Psoas muscle (tissue), 8 donors: ENCODE measurements at regions of chr6 and their contacts with region 1.

Region 1: DNA sequence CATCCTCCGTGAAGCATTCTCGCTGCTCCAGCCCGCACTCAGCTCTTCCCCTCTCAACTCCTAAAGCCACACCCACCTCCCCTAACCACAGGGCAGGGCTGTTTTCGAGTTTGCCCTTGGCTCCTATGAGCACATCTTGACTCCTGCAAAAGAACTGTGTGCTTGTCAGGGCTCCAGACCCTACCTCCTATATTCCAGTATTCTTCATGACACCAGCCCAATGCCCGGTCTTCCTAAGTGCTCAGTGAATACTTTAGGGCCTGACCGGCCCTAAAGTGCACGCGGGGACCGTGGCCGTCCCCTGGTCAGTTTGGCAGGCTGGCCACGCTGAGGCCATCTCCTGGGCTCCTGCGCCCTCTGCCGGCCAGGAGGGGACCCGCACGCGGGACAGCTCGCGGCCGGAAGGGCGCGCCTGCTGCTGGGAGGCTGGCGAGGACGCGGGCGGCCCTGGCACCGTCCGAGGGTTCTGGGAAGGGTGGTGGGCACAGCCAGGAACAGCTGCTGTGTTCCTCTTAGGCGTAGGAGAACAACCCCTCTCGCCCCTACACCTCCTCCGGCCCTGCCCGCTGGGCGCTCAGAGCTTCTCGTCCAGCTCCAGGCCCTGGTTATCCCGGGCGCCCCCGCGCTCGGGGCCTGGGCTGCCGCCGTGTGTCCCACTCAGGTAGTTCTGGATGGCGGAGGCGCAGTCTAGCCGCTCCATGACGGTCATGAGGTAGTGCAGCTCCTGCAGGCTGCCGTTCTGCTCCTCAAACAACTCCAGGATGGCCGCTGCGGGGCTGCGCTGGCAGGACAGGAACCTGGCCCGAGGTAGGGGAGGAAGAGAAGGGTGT is 11.0 kb downstream of the UNC5CL start:
- DNase-seq: peak; percentile 89 to 94
- ATAC-seq: peak; percentile 96 to 98 (median 96)
- H3K4me3 ChIP-seq: peak overlapping the region; percentile 68
- H3K27ac ChIP-seq: peak overlapping the region; percentile 85
- H3K4me1 ChIP-seq: peaks cover 4% of the 10 kb centered on the region
- H3K27me3 ChIP-seq: no peaks in the 10 kb centered on the region
- CTCF ChIP-seq: peak; percentile 100

Region 2: GRCh38 chr6:39980839-39981580 is 1047.0 kb before region 1 on chr6:
- intact Hi-C with region 1: loop called in 1 of 2 experiments (anchors 5 kb)
- DNase-seq: no peak
- ATAC-seq: peak; percentile 77 to 96 (median 85)
- H3K4me3 ChIP-seq: no peak overlapping the region
- H3K27ac ChIP-seq: no peak overlapping the region
- H3K4me1 ChIP-seq: peaks cover 14% of the 10 kb centered on the region
- H3K27me3 ChIP-seq: no peaks in the 10 kb centered on the region
- CTCF ChIP-seq: peak; percentile 48

Region 3: GRCh38 chr6:40822619-40823018 is 205.4 kb before region 1 on chr6:
- intact Hi-C with region 1: loop called in 1 of 2 experiments (anchors 10 kb)
- DNase-seq: no peak
- ATAC-seq: no peak
- H3K4me3 ChIP-seq: no peak overlapping the region
- H3K27ac ChIP-seq: no peak overlapping the region
- H3K4me1 ChIP-seq: peaks cover 17% of the 10 kb centered on the region
- H3K27me3 ChIP-seq: no peaks in the 10 kb centered on the region
- CTCF ChIP-seq: no peak

Region 4: GRCh38 chr6:40912158-40912946 is 115.7 kb before region 1 on chr6:
- intact Hi-C with region 1: loop called in 1 of 2 experiments (anchors 5 kb)
- DNase-seq: peak; percentile 18 to 66
- ATAC-seq: peak; percentile 96 to 99 (median 97)
- H3K4me3 ChIP-seq: no peak overlapping the region
- H3K27ac ChIP-seq: peak overlapping the region; percentile 5
- H3K4me1 ChIP-seq: peaks cover 7% of the 10 kb centered on the region
- H3K27me3 ChIP-seq: no peaks in the 10 kb centered on the region
- CTCF ChIP-seq: peak; percentile 66

Region 5: GRCh38 chr6:41066867-41067304 is 38.9 kb after region 1 on chr6:
- intact Hi-C with region 1: loop called (anchors 2 to 5 kb)
- DNase-seq: peak; percentile 69 to 81
- ATAC-seq: peak in 1 of 4 donors; percentile 23
- H3K4me3 ChIP-seq: no peak overlapping the region
- H3K27ac ChIP-seq: peak overlapping the region; percentile 92
- H3K4me1 ChIP-seq: peaks cover 39% of the 10 kb centered on the region
- H3K27me3 ChIP-seq: no peaks in the 10 kb centered on the region
- CTCF ChIP-seq: peak; percentile 90

Region 6: DNA sequence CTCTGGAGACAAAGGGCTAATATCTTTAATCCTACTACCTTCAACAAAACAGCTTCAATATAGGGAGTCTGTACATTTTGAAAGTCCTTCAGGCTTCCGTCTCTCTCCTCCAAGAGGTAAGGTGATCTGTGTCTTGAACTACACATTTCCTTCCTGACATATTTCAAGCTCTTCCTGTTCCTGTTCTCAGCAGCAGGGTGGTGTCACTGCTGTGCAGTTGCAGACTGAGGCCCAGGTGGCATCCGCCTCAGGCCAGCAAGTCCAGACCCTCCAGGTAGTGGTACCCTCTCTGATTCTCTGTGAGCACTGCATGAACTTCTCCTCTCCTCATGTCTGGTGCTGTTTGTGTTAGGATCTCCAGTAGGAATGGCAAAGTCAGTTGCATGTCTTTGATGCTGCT is 52.6 kb after region 1 on chr6:
- intact Hi-C with region 1: no loop called
- DNase-seq: no peak
- ATAC-seq: no peak
- H3K4me3 ChIP-seq: no peak overlapping the region
- H3K27ac ChIP-seq: no peak overlapping the region
- H3K4me1 ChIP-seq: peaks cover 25% of the 10 kb centered on the region
- H3K27me3 ChIP-seq: no peaks in the 10 kb centered on the region
- CTCF ChIP-seq: no peak